GM12878 (cell line): ENCODE measurements at regions of chr13 and their contacts with region 1.

Region 1: GRCh38 chr13:46893798-46894560 is 2.9 kb downstream of the HTR2A start:
- DNase-seq: peak; percentile 11
- ATAC-seq: peak; percentile 99
- H3K4me3 ChIP-seq: peak overlapping the region; percentile 70
- H3K27ac ChIP-seq: no peak overlapping the region
- H3K4me1 ChIP-seq: no peaks in the 10 kb centered on the region
- H3K27me3 ChIP-seq: peaks cover 4 to 6% of the 10 kb centered on the region in 2 experiments; a peak in 3 of 4 replicates
- CTCF ChIP-seq: peak; percentile 75 to 95 (median 76)
- EP300 ChIP-seq: no peak
- POLR2A ChIP-seq: no peak
- RAD21 ChIP-seq: peak; percentile 62

Region 2: DNA sequence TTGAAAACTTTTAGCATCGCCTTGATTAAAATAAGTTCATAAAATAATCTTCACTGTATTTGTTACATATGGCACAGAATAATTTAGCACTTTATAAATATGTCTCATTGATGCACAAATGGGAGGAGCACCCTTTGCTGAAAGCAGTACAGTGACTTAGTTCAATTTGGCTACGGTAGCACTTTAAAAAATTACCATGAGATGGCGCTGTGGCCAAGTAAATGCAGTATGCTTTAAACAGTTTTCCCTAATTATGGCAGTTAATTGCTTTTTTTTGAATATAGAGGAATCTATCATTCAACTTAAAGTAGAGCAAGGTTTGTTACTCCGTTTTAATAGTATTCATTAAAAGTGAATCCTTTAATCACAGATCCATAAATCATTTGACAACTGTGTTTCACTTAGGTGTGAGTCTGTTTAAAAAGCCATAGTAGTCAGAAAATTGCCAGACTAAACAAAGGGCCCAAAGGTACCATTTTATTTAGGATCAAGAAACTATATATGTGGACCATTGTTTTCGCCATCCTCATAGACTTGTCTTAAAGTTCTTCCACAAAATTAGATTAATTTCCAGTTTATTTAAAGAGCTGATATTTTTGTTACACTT is 62.3 kb before region 1 on chr13:
- CTCF ChIA-PET with region 1: interaction called, 4 read pairs
- POLR2A ChIA-PET with region 1: no interaction called
- RAD21 ChIA-PET with region 1: no interaction called
- SMC1A ChIA-PET with region 1: no interaction called
- in situ Hi-C with region 1: no loop called
- intact Hi-C with region 1: loop called (anchors 5 kb)
- DNase-seq: no peak
- ATAC-seq: peak; percentile 78
- H3K4me3 ChIP-seq: no peak overlapping the region
- H3K27ac ChIP-seq: no peak overlapping the region
- H3K4me1 ChIP-seq: no peaks in the 10 kb centered on the region
- H3K27me3 ChIP-seq: no peaks in the 10 kb centered on the region
- CTCF ChIP-seq: peak; percentile 51 to 82 (median 72)
- EP300 ChIP-seq: no peak
- POLR2A ChIP-seq: no peak
- RAD21 ChIP-seq: peak; percentile 84

Region 3: GRCh38 chr13:47459512-47459911 is 565.5 kb after region 1 on chr13:
- CTCF ChIA-PET with region 1: interaction called, 5 read pairs
- POLR2A ChIA-PET with region 1: no interaction called
- RAD21 ChIA-PET with region 1: interaction called, 5 read pairs
- SMC1A ChIA-PET with region 1: no interaction called
- in situ Hi-C with region 1: no loop called
- intact Hi-C with region 1: loop called (anchors 5 kb)
- DNase-seq: no peak
- ATAC-seq: no peak
- H3K4me3 ChIP-seq: no peak overlapping the region
- H3K27ac ChIP-seq: no peak overlapping the region
- H3K4me1 ChIP-seq: no peaks in the 10 kb centered on the region
- H3K27me3 ChIP-seq: no peaks in the 10 kb centered on the region
- CTCF ChIP-seq: peak in 2 of 3 experiments; percentile 7 to 31; a peak in 2 of 6 replicates
- EP300 ChIP-seq: no peak
- POLR2A ChIP-seq: no peak
- RAD21 ChIP-seq: peak; percentile 43

Region 4: DNA sequence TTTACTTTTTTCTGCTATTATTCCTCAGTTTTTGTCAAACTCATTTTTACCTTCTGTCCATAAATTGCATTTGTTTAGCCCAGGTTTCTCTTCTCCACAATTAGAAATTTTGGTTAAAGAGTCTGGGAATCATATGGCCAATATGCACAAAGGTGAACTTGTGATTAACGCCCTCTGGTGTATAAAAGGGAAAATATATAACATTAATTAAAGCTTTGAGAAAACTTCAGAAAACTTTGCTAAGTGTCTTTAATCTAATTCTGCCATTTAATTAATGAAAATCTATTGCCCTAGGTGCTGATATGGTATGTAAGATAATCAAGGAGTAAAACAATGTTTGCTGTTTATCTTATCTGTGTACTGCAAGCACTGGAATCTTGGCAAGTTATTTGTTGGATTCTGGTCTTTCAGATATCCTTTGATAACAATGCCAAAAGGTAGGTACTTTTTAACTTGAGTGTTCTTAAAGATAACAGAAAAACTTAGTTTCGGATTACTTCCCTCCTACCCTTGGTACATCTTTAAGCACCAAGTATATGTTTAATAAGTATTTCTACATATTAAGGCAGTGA is 704.4 kb after region 1 on chr13:
- CTCF ChIA-PET with region 1: no interaction called
- POLR2A ChIA-PET with region 1: no interaction called
- RAD21 ChIA-PET with region 1: no interaction called
- SMC1A ChIA-PET with region 1: no interaction called
- in situ Hi-C with region 1: no loop called
- intact Hi-C with region 1: loop called (anchors 10 kb)
- DNase-seq: no peak
- ATAC-seq: no peak
- H3K4me3 ChIP-seq: no peak overlapping the region
- H3K27ac ChIP-seq: no peak overlapping the region
- H3K4me1 ChIP-seq: no peaks in the 10 kb centered on the region
- H3K27me3 ChIP-seq: no peaks in the 10 kb centered on the region
- CTCF ChIP-seq: peak in 2 of 3 experiments; percentile 13 to 25; a peak in 1 of 6 replicates
- EP300 ChIP-seq: no peak
- POLR2A ChIP-seq: no peak
- RAD21 ChIP-seq: peak; percentile 34; the same call in 1 of the 2 replicates